ENCODE measurements at regions of chr6 and their contacts with region 1.

Region 1: GRCh38 chr6:139588076-139588639 is 213.7 kb upstream of the CITED2 start:
- DNase-seq: peak; percentile 63 to 99
- H3K4me3 ChIP-seq: peak overlapping the region; percentile 9; the same call in 1 of the 2 replicates
- H3K27ac ChIP-seq: peak overlapping the region; percentile 87
- H3K4me1 ChIP-seq: peaks cover 67% of the 10 kb centered on the region
- H3K27me3 ChIP-seq: no peaks in the 10 kb centered on the region
- CTCF ChIP-seq: no peak

Region 2: DNA sequence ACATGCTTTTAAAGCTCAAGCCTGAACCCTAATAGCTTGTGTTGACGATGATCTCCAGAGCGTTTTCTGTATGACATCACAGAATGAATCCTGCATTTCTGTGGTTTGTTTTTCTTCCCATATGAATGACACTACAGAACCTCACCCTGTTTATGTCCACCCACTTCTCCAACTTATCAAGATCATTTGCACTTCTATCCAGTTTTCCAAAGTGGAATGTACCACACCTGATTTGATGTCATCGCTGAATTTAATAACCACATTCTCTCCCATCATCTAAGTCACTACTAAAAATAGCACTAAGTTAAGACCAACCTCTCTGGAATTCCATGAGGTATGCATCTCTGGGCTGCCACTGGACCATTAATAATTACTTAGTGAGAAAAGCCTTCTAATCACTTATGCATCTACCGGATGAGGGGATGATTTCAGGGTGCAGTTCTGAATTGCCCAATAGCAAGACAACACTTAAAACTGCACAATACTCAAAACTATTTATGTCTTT is 180.4 kb before region 1 on chr6:
- CTCF ChIA-PET with region 1: no interaction called
- POLR2A ChIA-PET with region 1: interaction called, 4 read pairs
- intact Hi-C with region 1: loop called (anchors 1 kb)
- DNase-seq: peak; percentile 51 to 100
- H3K4me3 ChIP-seq: peak overlapping the region; percentile 15; the same call in 1 of the 2 replicates
- H3K27ac ChIP-seq: peak overlapping the region; percentile 94
- H3K4me1 ChIP-seq: peaks cover 41% of the 10 kb centered on the region
- H3K27me3 ChIP-seq: no peaks in the 10 kb centered on the region
- CTCF ChIP-seq: no peak

Region 3: GRCh38 chr6:139515511-139515910 is 72.6 kb before region 1 on chr6:
- CTCF ChIA-PET with region 1: no interaction called
- POLR2A ChIA-PET with region 1: no interaction called
- intact Hi-C with region 1: loop called (anchors 1 kb)
- DNase-seq: no peak
- H3K4me3 ChIP-seq: no peak overlapping the region
- H3K27ac ChIP-seq: no peak overlapping the region
- H3K4me1 ChIP-seq: peaks cover 23% of the 10 kb centered on the region
- H3K27me3 ChIP-seq: no peaks in the 10 kb centered on the region
- CTCF ChIP-seq: no peak

Region 4: DNA sequence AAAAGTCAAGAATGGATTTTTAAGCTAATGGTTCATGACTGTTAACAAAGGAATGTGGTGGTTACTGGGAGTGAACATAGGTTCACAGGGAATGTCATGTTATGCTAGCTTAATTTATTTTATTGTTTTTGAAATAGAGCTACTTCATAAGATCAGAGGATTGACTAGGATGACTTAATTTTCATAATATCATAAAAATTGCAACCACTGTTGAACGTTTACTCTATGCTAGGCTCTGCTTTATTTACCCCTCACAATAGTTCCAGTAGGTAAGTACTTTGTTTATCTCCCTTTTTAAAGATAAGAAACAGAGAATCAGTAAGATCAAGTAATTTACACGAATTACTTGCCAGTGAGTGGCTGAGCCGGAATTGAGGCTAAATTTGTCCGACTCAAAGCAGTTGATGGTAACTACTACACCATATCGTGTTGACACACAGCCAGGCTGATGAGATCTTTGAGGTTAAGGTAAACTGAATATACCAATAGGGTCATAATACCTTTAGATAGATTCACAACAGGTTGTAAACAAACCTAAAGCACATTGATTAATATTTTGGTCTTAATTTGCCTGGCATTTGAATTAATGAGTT is 19.1 kb before region 1 on chr6:
- CTCF ChIA-PET with region 1: no interaction called
- POLR2A ChIA-PET with region 1: interaction called, 9 read pairs
- intact Hi-C with region 1: loop called (anchors 2 kb)
- DNase-seq: peak in 1 of 2 experiments; percentile 87
- H3K4me3 ChIP-seq: no peak overlapping the region; the same call in 1 of the 2 replicates
- H3K27ac ChIP-seq: peak overlapping the region; percentile 76
- H3K4me1 ChIP-seq: peaks cover 21% of the 10 kb centered on the region
- H3K27me3 ChIP-seq: no peaks in the 10 kb centered on the region
- CTCF ChIP-seq: no peak

Region 5: GRCh38 chr6:139764498-139764986 is 176.4 kb after region 1 on chr6:
- CTCF ChIA-PET with region 1: no interaction called
- POLR2A ChIA-PET with region 1: no interaction called
- intact Hi-C with region 1: loop called (anchors 1 kb)
- DNase-seq: peak; percentile 52 to 99
- H3K4me3 ChIP-seq: no peak overlapping the region
- H3K27ac ChIP-seq: peak overlapping the region; percentile 80
- H3K4me1 ChIP-seq: peaks cover 62% of the 10 kb centered on the region
- H3K27me3 ChIP-seq: no peaks in the 10 kb centered on the region
- CTCF ChIP-seq: no peak

Region 6: GRCh38 chr6:139996253-139996834 is 408.2 kb after region 1 on chr6:
- CTCF ChIA-PET with region 1: no interaction called
- POLR2A ChIA-PET with region 1: no interaction called
- intact Hi-C with region 1: loop called (anchors 10 kb)
- DNase-seq: no peak
- H3K4me3 ChIP-seq: no peak overlapping the region
- H3K27ac ChIP-seq: no peak overlapping the region
- H3K4me1 ChIP-seq: no peaks in the 10 kb centered on the region
- H3K27me3 ChIP-seq: no peaks in the 10 kb centered on the region
- CTCF ChIP-seq: no peak

Region 7: GRCh38 chr6:140462453-140463311 is 874.5 kb after region 1 on chr6:
- CTCF ChIA-PET with region 1: no interaction called
- POLR2A ChIA-PET with region 1: no interaction called
- intact Hi-C with region 1: loop called (anchors 5 kb)
- DNase-seq: peak; percentile 40 to 99
- H3K4me3 ChIP-seq: peak overlapping the region; percentile 35; the same call in 1 of the 2 replicates
- H3K27ac ChIP-seq: peak overlapping the region; percentile 91
- H3K4me1 ChIP-seq: peaks cover 39% of the 10 kb centered on the region
- H3K27me3 ChIP-seq: no peaks in the 10 kb centered on the region
- CTCF ChIP-seq: no peak